ENCODE measurements at regions of chr5 and their contacts with region 1.

Region 1: GRCh38 chr5:159106569-159107282 is 7.0 kb upstream of the EBF1 start:
- DNase-seq: peak in 1 of 2 donors; percentile 88
- H3K4me3 ChIP-seq: peak overlapping the region; percentile 46 to 61
- H3K27ac ChIP-seq: peak overlapping the region in 1 of 2 donors; percentile 50
- H3K4me1 ChIP-seq: peaks cover 5 to 8% of the 10 kb centered on the region in 2 donors
- H3K27me3 ChIP-seq: no peaks in the 10 kb centered on the region
- CTCF ChIP-seq: peak; percentile 83 to 91 (median 89)

Region 2: DNA sequence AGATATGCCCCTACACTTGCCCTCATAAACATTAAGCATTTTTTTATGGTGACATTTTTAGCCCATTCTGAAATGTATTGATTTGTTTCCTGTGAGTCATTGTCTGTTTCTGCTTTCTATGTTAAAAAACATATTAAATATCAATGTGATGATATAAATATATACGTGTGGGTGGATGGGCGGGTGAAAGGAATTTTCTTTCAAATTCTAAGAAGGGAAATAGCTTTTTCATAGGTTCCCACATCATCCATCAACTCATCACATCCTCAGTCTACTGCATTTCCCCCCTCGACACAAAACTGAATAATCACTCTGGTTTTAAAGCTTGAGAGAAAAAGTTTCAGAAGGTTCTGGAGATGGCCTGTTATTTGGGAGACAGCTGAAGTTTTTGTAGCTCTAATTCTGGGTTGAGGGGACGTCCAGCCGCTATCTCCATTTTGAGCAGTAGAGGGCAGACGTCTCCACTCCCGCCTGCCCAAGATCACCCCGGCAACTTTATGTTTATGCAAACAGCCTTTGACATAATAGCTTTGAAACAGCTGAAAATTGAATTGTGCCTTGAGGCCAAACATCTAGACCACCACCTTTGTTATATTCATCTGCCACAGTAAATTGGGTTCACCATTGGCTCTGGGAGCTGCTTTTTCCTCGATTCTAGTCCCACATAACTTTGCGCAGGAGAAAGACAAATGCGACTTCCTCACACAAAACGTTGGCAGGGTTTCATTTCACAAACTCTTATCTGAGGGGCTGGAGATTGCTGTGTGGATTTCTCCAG is 1031.5 kb before region 1 on chr5:
- intact Hi-C with region 1: loop called (anchors 2 kb)
- DNase-seq: peak in 1 of 2 donors; percentile 71
- H3K4me3 ChIP-seq: peak overlapping the region; percentile 37 to 41
- H3K27ac ChIP-seq: no peak overlapping the region
- H3K4me1 ChIP-seq: no peaks in the 10 kb centered on the region
- H3K27me3 ChIP-seq: no peaks in the 10 kb centered on the region
- CTCF ChIP-seq: peak; percentile 61 to 84 (median 79)

Region 3: DNA sequence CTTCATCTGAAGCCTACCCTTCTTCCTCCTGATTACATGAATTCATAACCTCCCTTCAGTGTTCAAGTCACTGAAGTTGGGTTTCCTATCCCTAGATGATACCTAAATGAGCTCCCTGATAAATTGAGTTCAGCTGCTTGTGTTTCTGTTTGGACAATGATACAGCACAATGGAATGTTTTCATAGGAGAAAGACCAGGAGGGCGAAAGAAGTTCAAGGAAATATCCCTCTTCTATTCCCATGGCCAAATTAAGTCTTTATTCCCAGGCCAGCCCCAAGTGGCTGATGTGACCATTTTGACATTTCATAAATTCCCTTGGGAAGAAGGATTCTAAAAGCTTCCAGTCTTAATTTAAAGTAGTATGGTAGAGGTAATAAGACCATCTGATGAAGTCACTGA is 691.9 kb before region 1 on chr5:
- intact Hi-C with region 1: loop called (anchors 10 kb)
- DNase-seq: no peak
- H3K4me3 ChIP-seq: no peak overlapping the region
- H3K27ac ChIP-seq: peak overlapping the region; percentile 44 to 68
- H3K4me1 ChIP-seq: peaks cover 0 to 17% of the 10 kb centered on the region in 2 donors
- H3K27me3 ChIP-seq: no peaks in the 10 kb centered on the region
- CTCF ChIP-seq: no peak

Region 4: GRCh38 chr5:158463938-158464337 is 642.8 kb before region 1 on chr5:
- intact Hi-C with region 1: loop called (anchors 10 kb)
- DNase-seq: peak; percentile 17 to 82
- H3K4me3 ChIP-seq: no peak overlapping the region
- H3K27ac ChIP-seq: peak overlapping the region; percentile 4 to 47
- H3K4me1 ChIP-seq: peaks cover 0 to 15% of the 10 kb centered on the region in 2 donors
- H3K27me3 ChIP-seq: no peaks in the 10 kb centered on the region
- CTCF ChIP-seq: no peak

Region 5: DNA sequence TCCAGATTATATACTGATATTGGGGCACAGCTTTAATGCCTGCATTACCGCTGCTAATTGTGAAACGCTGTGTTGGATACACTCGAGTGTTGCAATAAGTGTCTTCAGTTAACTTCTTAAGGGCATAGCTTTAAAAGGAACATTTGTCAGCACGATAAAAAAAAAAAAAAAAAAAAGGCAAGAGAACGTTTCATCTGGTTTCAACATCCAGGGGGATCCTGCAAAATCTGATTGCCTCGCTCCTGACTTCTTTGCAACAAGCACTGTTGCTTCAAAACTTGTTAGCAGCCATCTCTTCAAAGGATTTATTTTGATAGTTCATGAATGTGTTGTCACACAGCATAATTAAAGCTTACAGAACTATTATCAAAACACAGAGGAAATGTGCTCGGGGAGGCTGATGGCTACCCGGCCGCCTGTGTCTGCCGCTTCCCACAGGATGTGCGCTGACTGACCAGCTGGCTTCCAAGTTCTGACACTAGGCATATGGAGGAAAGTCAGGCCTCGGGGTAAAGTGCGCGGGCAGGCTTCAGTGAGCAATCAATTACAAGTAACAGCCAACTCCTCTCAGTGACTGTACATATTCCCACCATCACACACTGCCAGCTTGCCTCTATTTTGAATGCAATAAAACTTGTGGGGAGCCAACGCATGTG is 84.7 kb before region 1 on chr5:
- intact Hi-C with region 1: no loop called
- DNase-seq: peak in 1 of 2 donors; percentile 73
- H3K4me3 ChIP-seq: peak overlapping the region in 1 of 2 donors; percentile 22
- H3K27ac ChIP-seq: peak overlapping the region; percentile 8 to 41
- H3K4me1 ChIP-seq: peaks cover 0 to 13% of the 10 kb centered on the region in 2 donors
- H3K27me3 ChIP-seq: no peaks in the 10 kb centered on the region
- CTCF ChIP-seq: no peak

Region 6: DNA sequence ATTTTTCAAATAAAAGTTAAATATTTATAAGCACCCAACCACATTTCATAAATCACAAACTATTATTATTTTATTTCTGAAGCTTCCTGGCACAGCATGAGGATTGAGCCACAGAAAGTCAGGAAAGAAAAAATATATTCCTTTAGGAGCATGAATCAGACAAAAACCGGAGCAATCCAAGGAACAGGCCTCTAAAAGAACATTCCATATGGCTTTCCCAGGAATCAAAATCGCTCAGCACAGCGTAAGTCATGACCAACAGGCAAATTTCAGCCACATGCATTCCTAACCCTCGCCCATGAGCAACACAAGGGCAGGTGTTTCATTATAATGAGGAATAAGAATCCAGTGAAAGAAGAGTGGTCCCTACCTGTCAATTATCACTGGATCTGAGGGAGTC is 33.7 kb before region 1 on chr5:
- intact Hi-C with region 1: no loop called
- DNase-seq: no peak
- H3K4me3 ChIP-seq: peak overlapping the region in 1 of 2 donors; percentile 49
- H3K27ac ChIP-seq: peak overlapping the region; percentile 85 to 91
- H3K4me1 ChIP-seq: peaks cover 9 to 60% of the 10 kb centered on the region in 2 donors
- H3K27me3 ChIP-seq: no peaks in the 10 kb centered on the region
- CTCF ChIP-seq: no peak